ENCODE measurements at regions of chr21 and their contacts with region 1.

Region 1: DNA sequence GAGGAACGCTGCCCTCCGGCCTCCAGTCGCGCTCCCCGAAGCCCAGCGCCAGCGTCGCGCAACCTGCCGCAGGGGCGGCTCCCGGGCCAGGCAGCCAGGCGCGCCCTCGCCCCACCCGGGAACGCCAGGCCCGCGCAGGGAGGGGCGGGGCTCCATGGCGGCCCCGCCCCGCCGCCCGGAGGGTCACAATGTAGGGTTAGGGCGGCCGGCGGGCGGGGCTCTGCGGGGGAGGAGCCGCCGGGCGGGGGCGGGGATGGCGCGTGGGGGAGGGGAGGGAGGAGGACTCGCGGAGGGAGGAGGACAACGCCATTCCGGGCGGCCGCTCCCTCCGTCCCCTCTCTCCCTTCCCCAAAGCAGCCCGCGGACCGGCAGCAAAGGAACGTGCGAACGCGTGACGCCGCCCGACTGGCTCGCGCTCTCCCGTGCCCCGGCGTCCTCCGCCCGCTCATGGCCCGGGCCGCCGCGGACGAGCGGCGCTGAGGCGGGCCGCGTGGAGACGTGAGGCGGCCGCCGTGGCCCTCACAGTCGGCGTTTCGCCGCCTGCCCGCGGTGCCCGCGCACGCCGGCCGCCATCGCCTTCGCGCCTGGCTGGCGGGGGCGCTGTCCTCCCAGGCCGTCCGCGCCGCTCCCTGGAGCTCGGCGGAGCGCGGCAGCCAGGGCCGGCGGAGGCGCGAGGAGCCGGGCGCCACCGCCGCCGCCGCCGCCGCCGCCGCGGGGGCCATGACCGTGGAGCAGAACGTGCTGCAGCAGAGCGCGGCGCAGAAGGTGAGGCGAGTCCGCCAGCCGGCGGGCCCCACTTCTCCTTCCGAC is at the start of gene USP25:
- DNase-seq: peak; percentile 79 to 93
- ATAC-seq: peak; percentile 81 to 94 (median 83)
- H3K4me3 ChIP-seq: peak within 1 kb of the TSS; percentile 63
- H3K4me3 Mint-ChIP-seq: peak within 1 kb of the TSS; percentile 95
- H3K27ac ChIP-seq: peak within 1 kb of the TSS; percentile 80
- H3K27ac Mint-ChIP-seq: peak within 1 kb of the TSS; percentile 91 to 93
- H3K4me1 ChIP-seq: peaks cover 15% of the 10 kb centered on the region
- H3K4me1 Mint-ChIP-seq: peaks cover 30 to 42% of the 10 kb centered on the region in 2 donors
- H3K27me3 ChIP-seq: no peaks in the 10 kb centered on the region
- H3K27me3 Mint-ChIP-seq: peaks cover 0 to 3% of the 10 kb centered on the region in 2 donors
- CTCF ChIP-seq: no peak
- total RNA-seq, gene USP25: 67.0 to 95.4 (median 76.4) TPM

Region 2: GRCh38 chr21:14382835-14383594 is 1346.9 kb before region 1 on chr21 and contains the start of gene HSPA13:
- intact Hi-C with region 1: loop called (anchors 5 kb)
- DNase-seq: peak; percentile 97 to 99
- ATAC-seq: peak; percentile 92 to 99 (median 94)
- H3K4me3 ChIP-seq: peak within 1 kb of the TSS; percentile 66
- H3K4me3 Mint-ChIP-seq: peak within 1 kb of the TSS; percentile 100
- H3K27ac ChIP-seq: peak within 1 kb of the TSS; percentile 91
- H3K27ac Mint-ChIP-seq: peak within 1 kb of the TSS; percentile 100
- H3K4me1 ChIP-seq: no peaks in the 10 kb centered on the region
- H3K4me1 Mint-ChIP-seq: peaks cover 25 to 26% of the 10 kb centered on the region in 2 donors
- H3K27me3 ChIP-seq: no peaks in the 10 kb centered on the region
- H3K27me3 Mint-ChIP-seq: no peaks in the 10 kb centered on the region
- CTCF ChIP-seq: no peak
- total RNA-seq, gene HSPA13: 17.0 to 23.8 (median 22.7) TPM

Region 3: GRCh38 chr21:15064576-15065391 is 665.1 kb before region 1 on chr21 and contains the start of gene NRIP1:
- intact Hi-C with region 1: loop called (anchors 5 kb)
- DNase-seq: peak; percentile 86 to 89
- ATAC-seq: peak; percentile 79 to 91 (median 84)
- H3K4me3 ChIP-seq: peak within 1 kb of the TSS; percentile 87
- H3K4me3 Mint-ChIP-seq: peak within 1 kb of the TSS; percentile 96
- H3K27ac ChIP-seq: peak within 1 kb of the TSS; percentile 91
- H3K27ac Mint-ChIP-seq: peak within 1 kb of the TSS; percentile 90 to 96
- H3K4me1 ChIP-seq: peaks cover 10% of the 10 kb centered on the region
- H3K4me1 Mint-ChIP-seq: peaks cover 40 to 45% of the 10 kb centered on the region in 2 donors
- H3K27me3 ChIP-seq: no peaks in the 10 kb centered on the region
- H3K27me3 Mint-ChIP-seq: no peaks in the 10 kb centered on the region
- CTCF ChIP-seq: no peak
- total RNA-seq, gene NRIP1: 42.4 to 46.8 (median 42.6) TPM

Region 4: GRCh38 chr21:15688809-15689208 is 41.1 kb before region 1 on chr21:
- intact Hi-C with region 1: loop called (anchors 2 kb)
- DNase-seq: peak in 1 of 2 donors; percentile 40
- ATAC-seq: peak; percentile 50 to 70 (median 59)
- H3K4me3 ChIP-seq: no peak overlapping the region
- H3K4me3 Mint-ChIP-seq: peak overlapping the region; percentile 25
- H3K27ac ChIP-seq: no peak overlapping the region
- H3K27ac Mint-ChIP-seq: no peak overlapping the region
- H3K4me1 ChIP-seq: no peaks in the 10 kb centered on the region
- H3K4me1 Mint-ChIP-seq: peaks cover 9 to 16% of the 10 kb centered on the region in 2 donors
- H3K27me3 ChIP-seq: no peaks in the 10 kb centered on the region
- H3K27me3 Mint-ChIP-seq: peaks cover 31 to 38% of the 10 kb centered on the region in 2 donors
- CTCF ChIP-seq: no peak

Region 5: GRCh38 chr21:15788847-15789493 is 59.1 kb after region 1 on chr21:
- intact Hi-C with region 1: loop called (anchors 5 kb)
- DNase-seq: no peak
- ATAC-seq: no peak
- H3K4me3 ChIP-seq: no peak overlapping the region
- H3K4me3 Mint-ChIP-seq: no peak overlapping the region
- H3K27ac ChIP-seq: no peak overlapping the region
- H3K27ac Mint-ChIP-seq: peak overlapping the region; percentile 57 to 68
- H3K4me1 ChIP-seq: peaks cover 7% of the 10 kb centered on the region
- H3K4me1 Mint-ChIP-seq: peaks cover 37 to 46% of the 10 kb centered on the region in 2 donors
- H3K27me3 ChIP-seq: no peaks in the 10 kb centered on the region
- H3K27me3 Mint-ChIP-seq: no peaks in the 10 kb centered on the region
- CTCF ChIP-seq: no peak